Activated CD8-positive, alpha-beta T cell treated with anti-CD3 and anti-CD28 coated beads for 36 hours (primary cell): ENCODE measurements at regions of chr2 and their contacts with region 1.

Region 1: GRCh38 chr2:240060977-240061591 is 7.8 kb upstream of the OR6B3 start:
- DNase-seq: peak; percentile 66
- ATAC-seq: peak; percentile 87
- H3K4me3 Mint-ChIP-seq: no peak overlapping the region
- H3K27ac Mint-ChIP-seq: no peak overlapping the region
- H3K4me1 Mint-ChIP-seq: no peaks in the 10 kb centered on the region
- H3K27me3 Mint-ChIP-seq: peaks cover 22% of the 10 kb centered on the region
- CTCF ChIP-seq: peak; percentile 69

Region 2: GRCh38 chr2:240095556-240096523 is 34.8 kb after region 1 on chr2:
- CTCF ChIA-PET with region 1: interaction called, 12 read pairs
- POLR2A ChIA-PET with region 1: no interaction called
- intact Hi-C with region 1: no loop called
- DNase-seq: no peak
- ATAC-seq: no peak
- H3K4me3 Mint-ChIP-seq: no peak overlapping the region
- H3K27ac Mint-ChIP-seq: no peak overlapping the region
- H3K4me1 Mint-ChIP-seq: no peaks in the 10 kb centered on the region
- H3K27me3 Mint-ChIP-seq: peaks cover 66% of the 10 kb centered on the region
- CTCF ChIP-seq: no peak

Region 3: GRCh38 chr2:240111251-240111650 is 50.2 kb after region 1 on chr2:
- CTCF ChIA-PET with region 1: interaction called, 12 read pairs
- POLR2A ChIA-PET with region 1: no interaction called
- intact Hi-C with region 1: no loop called
- DNase-seq: no peak
- ATAC-seq: no peak
- H3K4me3 Mint-ChIP-seq: no peak overlapping the region
- H3K27ac Mint-ChIP-seq: no peak overlapping the region
- H3K4me1 Mint-ChIP-seq: no peaks in the 10 kb centered on the region
- H3K27me3 Mint-ChIP-seq: peaks cover 18% of the 10 kb centered on the region
- CTCF ChIP-seq: no peak

Region 4: DNA sequence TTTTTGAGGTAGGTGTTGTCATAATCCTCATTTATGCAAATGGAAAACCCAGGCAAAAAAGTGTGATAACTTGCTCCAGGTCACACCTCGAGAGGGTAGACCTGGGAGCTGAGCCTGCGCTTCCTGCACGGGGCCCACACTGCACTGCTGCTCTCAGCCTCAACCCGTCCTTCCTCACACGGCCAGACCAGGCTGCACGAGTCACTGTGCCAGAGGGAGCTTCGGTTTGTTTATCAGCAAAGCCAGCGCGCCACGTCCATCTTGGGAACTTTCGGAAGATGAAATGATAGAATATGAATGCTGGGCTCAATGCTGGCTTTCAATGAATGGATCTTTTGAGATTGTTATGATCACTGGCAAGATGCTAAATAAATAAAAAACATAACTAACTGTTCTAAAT is 60.6 kb after region 1 on chr2:
- CTCF ChIA-PET with region 1: interaction called, 10 read pairs
- POLR2A ChIA-PET with region 1: no interaction called
- intact Hi-C with region 1: no loop called
- DNase-seq: no peak
- ATAC-seq: no peak
- H3K4me3 Mint-ChIP-seq: no peak overlapping the region
- H3K27ac Mint-ChIP-seq: no peak overlapping the region
- H3K4me1 Mint-ChIP-seq: peaks cover 10% of the 10 kb centered on the region
- H3K27me3 Mint-ChIP-seq: peaks cover 2% of the 10 kb centered on the region
- CTCF ChIP-seq: no peak

Region 5: GRCh38 chr2:240138254-240138984 is 77.3 kb after region 1 on chr2:
- CTCF ChIA-PET with region 1: interaction called, 100 read pairs
- POLR2A ChIA-PET with region 1: no interaction called
- intact Hi-C with region 1: no loop called
- DNase-seq: no peak
- ATAC-seq: no peak
- H3K4me3 Mint-ChIP-seq: no peak overlapping the region
- H3K27ac Mint-ChIP-seq: no peak overlapping the region
- H3K4me1 Mint-ChIP-seq: peaks cover 24% of the 10 kb centered on the region
- H3K27me3 Mint-ChIP-seq: peaks cover 1% of the 10 kb centered on the region
- CTCF ChIP-seq: no peak

Region 6: DNA sequence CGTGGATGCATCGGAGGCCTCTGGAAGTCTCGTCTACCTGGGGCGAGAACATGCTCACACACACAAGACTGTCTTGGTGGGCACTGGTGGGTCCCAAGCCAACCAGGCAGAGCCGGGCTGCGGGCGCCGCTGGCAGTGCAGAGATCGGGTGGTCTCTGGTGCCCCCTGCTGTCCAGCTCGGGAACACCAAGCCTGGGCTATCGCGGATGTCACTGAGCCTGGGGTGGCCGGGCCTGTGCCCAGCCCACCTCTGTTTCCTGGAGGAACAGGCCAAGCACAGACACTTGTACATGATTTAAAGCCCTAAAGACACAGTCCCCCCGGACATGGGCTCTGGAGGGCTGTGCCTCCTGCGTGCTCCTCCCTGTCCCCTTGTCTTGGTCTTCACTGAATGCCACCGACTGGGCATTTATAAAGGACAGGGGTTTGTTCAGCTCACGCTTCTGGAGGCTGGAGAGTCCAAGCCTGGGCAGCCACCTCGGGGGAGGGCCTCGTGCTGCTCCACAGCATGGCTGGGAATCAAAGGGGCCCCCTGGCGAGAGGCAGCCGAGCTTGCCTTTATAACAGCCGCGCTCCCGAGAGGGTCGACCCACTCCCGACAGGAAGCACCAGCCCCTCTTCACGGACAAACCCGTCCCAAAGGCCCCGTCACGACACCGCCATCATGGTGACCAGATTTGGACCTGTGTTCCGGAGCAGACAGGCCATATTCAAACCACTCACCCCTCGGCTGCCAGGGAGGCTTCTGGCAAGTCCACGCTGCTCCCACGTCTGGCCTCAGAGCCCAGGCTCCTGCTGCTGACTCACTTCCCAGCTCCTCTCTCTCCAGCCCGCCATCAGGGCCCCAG is 82.9 kb after region 1 on chr2:
- CTCF ChIA-PET with region 1: interaction called, 100 read pairs
- POLR2A ChIA-PET with region 1: no interaction called
- intact Hi-C with region 1: loop called (anchors 1 kb)
- DNase-seq: peak; percentile 83
- ATAC-seq: peak; percentile 97
- H3K4me3 Mint-ChIP-seq: no peak overlapping the region
- H3K27ac Mint-ChIP-seq: no peak overlapping the region
- H3K4me1 Mint-ChIP-seq: no peaks in the 10 kb centered on the region
- H3K27me3 Mint-ChIP-seq: peaks cover 4% of the 10 kb centered on the region
- CTCF ChIP-seq: peak; percentile 87